ENCODE measurements at regions of chr17 and their contacts with region 1.

Region 1: GRCh38 chr17:78140169-78140976 is 5.8 kb upstream of the C17orf99 start:
- DNase-seq: peak; percentile 84 to 99
- H3K4me3 ChIP-seq: peak overlapping the region; percentile 51; the same call in 1 of the 2 replicates
- H3K27ac ChIP-seq: peak overlapping the region; percentile 34; the same call in 1 of the 2 replicates
- H3K4me1 ChIP-seq: peaks cover 43% of the 10 kb centered on the region
- H3K27me3 ChIP-seq: no peaks in the 10 kb centered on the region
- CTCF ChIP-seq: no peak

Region 2: DNA sequence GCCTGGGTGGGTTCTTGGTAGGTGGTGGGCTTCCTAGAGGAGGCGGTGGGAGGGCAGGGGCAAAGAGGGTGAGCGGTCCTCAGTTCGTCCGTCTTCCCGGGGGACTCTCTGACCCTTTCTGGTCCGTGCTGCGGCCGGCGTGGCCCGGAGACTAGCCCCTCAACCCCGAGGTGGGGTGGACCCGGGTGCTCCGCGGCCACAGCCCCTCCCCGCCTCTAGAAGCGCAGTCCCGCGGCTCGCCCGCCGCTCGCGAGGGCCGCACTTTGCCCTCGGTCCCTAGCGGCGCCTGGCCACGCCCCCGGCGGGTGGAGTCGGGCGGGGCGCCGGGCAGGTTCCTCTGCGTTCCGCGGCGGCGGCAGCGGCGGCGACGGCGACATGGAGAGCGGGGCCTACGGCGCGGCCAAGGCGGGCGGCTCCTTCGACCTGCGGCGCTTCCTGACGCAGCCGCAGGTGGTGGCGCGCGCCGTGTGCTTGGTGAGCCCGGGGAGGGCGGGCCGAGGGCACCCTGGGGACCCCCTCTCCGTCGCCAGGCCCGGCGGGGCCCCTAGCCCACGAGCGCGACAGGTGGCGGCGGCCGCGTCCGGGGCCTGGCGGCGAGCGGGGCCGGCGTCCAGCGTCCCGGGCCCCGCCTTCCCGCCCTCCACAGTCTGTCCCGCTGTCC is 28.0 kb after region 1 on chr17 and contains the start of gene SYNGR2:
- CTCF ChIA-PET with region 1: interaction called, 4 read pairs
- POLR2A ChIA-PET with region 1: interaction called, 12 read pairs
- intact Hi-C with region 1: loop called (anchors 1 kb)
- DNase-seq: peak; percentile 55 to 89
- H3K4me3 ChIP-seq: peak within 1 kb of the TSS; percentile 67
- H3K27ac ChIP-seq: no peak within 1 kb of the TSS
- H3K4me1 ChIP-seq: peaks cover 10% of the 10 kb centered on the region; the same call in 1 of the 2 replicates
- H3K27me3 ChIP-seq: no peaks in the 10 kb centered on the region
- CTCF ChIP-seq: no peak
- total RNA-seq, gene SYNGR2: 91.9 and 95.0 TPM in 2 replicates

Region 3: GRCh38 chr17:78186692-78187595 is 46.6 kb after region 1 on chr17 and contains the starts of genes AFMID and TK1:
- CTCF ChIA-PET with region 1: interaction called, 8 read pairs
- POLR2A ChIA-PET with region 1: interaction called, 7 read pairs
- intact Hi-C with region 1: loop called (anchors 1 kb)
- DNase-seq: peak; percentile 90 to 99
- H3K4me3 ChIP-seq: peak within 1 kb of the TSS; percentile 69
- H3K27ac ChIP-seq: no peak within 1 kb of the TSS; the same call in 1 of the 2 replicates
- H3K4me1 ChIP-seq: peaks cover 8% of the 10 kb centered on the region
- H3K27me3 ChIP-seq: no peaks in the 10 kb centered on the region
- CTCF ChIP-seq: peak; percentile 83
- total RNA-seq, gene AFMID: 30.4 and 43.6 TPM in 2 replicates
- total RNA-seq, gene TK1: 137 and 147 TPM in 2 replicates

Region 4: GRCh38 chr17:78197147-78197832 is 56.9 kb after region 1 on chr17:
- CTCF ChIA-PET with region 1: no interaction called
- POLR2A ChIA-PET with region 1: no interaction called
- intact Hi-C with region 1: no loop called
- DNase-seq: no peak
- H3K4me3 ChIP-seq: no peak overlapping the region
- H3K27ac ChIP-seq: no peak overlapping the region
- H3K4me1 ChIP-seq: no peaks in the 10 kb centered on the region; the same call in 1 of the 2 replicates
- H3K27me3 ChIP-seq: no peaks in the 10 kb centered on the region
- CTCF ChIP-seq: no peak

Region 5: DNA sequence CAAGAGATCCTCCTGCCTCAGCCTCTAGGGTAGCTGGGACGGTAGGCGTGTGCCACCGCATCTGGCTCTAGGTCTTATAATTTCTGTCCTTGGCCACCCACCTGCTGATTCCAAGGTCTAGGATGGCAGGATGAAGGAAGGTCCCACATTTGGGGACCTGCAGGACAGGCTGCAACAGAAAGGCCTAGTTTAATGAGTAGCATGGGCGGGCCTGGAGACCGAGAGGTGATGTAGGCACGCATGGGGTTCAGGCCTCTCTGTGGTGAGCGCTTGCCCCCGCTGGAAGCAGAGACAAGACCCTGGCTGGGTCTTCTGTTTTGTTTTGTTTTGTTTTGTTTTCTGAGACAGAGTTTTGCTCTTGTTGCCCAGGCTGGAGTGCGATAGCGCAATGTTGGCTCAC is 124.7 kb after region 1 on chr17:
- CTCF ChIA-PET with region 1: no interaction called
- POLR2A ChIA-PET with region 1: interaction called, 22 read pairs
- intact Hi-C with region 1: no loop called
- DNase-seq: no peak
- H3K4me3 ChIP-seq: no peak overlapping the region
- H3K27ac ChIP-seq: no peak overlapping the region
- H3K4me1 ChIP-seq: no peaks in the 10 kb centered on the region
- H3K27me3 ChIP-seq: peaks cover 8% of the 10 kb centered on the region
- CTCF ChIP-seq: no peak

Measured in PC-9 (cell line).